Activated CD4-positive, alpha-beta T cell treated with anti-CD3 and anti-CD28 coated beads, Interleukin-2, amount 10 ng/mL, durations not matched to agents 24 days and 14 days (primary cell): ENCODE measurements at regions of chr2 and their contacts with region 1.

Region 1: GRCh38 chr2:10620481-10620880 is 69.3 kb downstream of the NOL10 start:
- DNase-seq: peak; percentile 68
- H3K4me3 Mint-ChIP-seq: peak overlapping the region; percentile 59
- H3K27ac Mint-ChIP-seq: peak overlapping the region; percentile 63
- H3K4me1 Mint-ChIP-seq: peaks cover 48% of the 10 kb centered on the region
- H3K27me3 Mint-ChIP-seq: no peaks in the 10 kb centered on the region

Region 2: GRCh38 chr2:10654069-10654468 is 33.6 kb after region 1 on chr2:
- intact Hi-C with region 1: loop called (anchors 1 kb)
- DNase-seq: peak; percentile 78
- H3K4me3 Mint-ChIP-seq: peak overlapping the region; percentile 72
- H3K27ac Mint-ChIP-seq: peak overlapping the region; percentile 81
- H3K4me1 Mint-ChIP-seq: peaks cover 47% of the 10 kb centered on the region
- H3K27me3 Mint-ChIP-seq: no peaks in the 10 kb centered on the region